ENCODE measurements at regions of chr6 and their contacts with region 1.

Region 1: GRCh38 chr6:4647414-4648365 is 128.5 kb upstream of the CDYL start:
- DNase-seq: peak; percentile 88

Region 2: DNA sequence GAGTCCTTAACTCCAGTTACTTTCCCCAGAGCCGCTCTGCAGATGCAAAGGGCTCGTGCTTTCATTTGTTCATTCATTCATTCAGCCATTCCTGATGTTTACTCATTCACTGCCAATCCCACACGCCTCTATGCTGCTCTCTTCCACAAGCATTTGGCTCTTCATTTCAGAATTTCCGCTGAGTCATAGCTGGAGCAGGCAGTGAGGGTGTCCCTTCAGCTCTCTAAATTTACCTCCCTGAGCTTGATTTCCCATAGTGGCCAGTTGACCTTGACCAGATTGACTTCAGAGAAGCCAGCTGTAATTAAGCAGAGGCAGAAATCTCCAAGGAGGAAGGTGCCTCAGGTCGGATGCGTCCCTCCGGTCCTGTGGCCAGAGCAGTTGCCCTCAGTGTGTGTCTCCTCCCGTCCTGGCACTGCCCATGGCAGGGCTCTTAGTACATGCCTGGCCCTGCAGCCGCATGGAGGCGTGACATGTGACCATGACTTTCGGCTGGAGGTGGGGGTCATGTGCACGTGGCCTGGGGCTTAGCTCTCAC is 245.2 kb before region 1 on chr6:
- intact Hi-C with region 1: no loop called
- DNase-seq: no peak

Region 3: GRCh38 chr6:4662886-4663285 is 15.2 kb after region 1 on chr6:
- intact Hi-C with region 1: loop called (anchors 1 kb)
- DNase-seq: no peak

Region 4: DNA sequence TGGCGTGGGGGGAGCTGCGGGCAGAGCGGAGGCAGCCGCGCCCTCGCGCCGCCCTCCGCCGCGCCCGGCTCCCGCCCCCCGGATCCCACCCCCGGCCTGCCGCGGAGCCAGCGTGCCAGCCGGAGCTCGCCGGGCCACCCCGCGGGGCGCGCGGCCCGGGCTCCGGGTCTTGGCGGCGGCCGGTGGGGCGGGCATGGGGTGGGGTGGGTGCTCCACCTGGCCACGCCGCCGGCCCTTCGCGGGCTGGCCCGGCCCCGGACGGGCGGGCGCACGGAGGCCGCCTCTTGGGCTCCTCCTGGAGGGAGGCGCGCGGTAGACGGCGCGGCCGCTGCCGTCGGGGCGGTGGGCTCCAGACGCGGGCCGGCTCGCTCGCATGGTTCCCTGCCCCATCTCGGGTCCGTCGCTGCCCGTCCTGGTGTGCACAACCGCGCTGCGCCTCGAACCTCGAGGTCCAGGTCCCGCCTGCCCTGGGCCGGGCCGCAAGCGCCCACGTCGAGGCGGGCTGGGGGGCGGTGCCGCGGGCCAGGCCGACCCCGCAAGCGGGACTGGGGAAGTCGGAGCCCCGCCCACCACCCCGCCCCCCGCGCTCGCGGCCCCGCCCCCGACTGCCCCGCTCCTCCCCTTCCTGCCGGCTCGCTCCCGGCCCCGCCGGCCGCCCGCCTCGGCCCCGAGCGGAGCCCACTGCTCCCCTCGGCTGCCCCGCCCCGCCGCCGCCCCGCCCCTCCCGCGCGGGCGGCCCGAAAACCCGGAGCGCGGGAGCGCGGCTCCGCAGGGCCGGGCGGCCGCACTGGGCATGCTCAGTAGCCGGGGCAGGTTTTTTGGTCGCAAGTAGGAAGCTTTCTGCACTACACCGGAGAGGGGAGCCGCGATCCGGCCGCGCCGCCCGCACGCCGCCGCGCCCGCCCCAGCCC is 128.1 kb after region 1 on chr6 and contains the start of gene CDYL:
- intact Hi-C with region 1: loop called (anchors 1 kb)
- DNase-seq: peak; percentile 93
- total RNA-seq, gene CDYL: 36.3 TPM

Measured in cardiac septum (tissue), 1 donor.